Activated B cell treated with CpG ODN at 0.5 μM for 24 hours (primary cell): ENCODE measurements at regions of chr2 and their contacts with region 1.

Region 1: GRCh38 chr2:70789304-70790135 is 923 bp downstream of the FIGLA start:
- DNase-seq: peak; percentile 31
- ATAC-seq: peak; percentile 67
- H3K4me3 Mint-ChIP-seq: peak overlapping the region; percentile 80
- H3K27ac Mint-ChIP-seq: no peak overlapping the region
- H3K4me1 Mint-ChIP-seq: peaks cover 6% of the 10 kb centered on the region
- H3K27me3 Mint-ChIP-seq: peaks cover 51% of the 10 kb centered on the region
- CTCF ChIP-seq: no peak

Region 2: GRCh38 chr2:70656421-70657010 is 133.0 kb before region 1 on chr2:
- CTCF ChIA-PET with region 1: no interaction called
- POLR2A ChIA-PET with region 1: no interaction called
- intact Hi-C with region 1: loop called (anchors 1 kb)
- DNase-seq: no peak
- ATAC-seq: no peak
- H3K4me3 Mint-ChIP-seq: no peak overlapping the region
- H3K27ac Mint-ChIP-seq: no peak overlapping the region
- H3K4me1 Mint-ChIP-seq: no peaks in the 10 kb centered on the region
- H3K27me3 Mint-ChIP-seq: peaks cover 23% of the 10 kb centered on the region
- CTCF ChIP-seq: no peak

Region 3: GRCh38 chr2:70686577-70687460 is 102.7 kb before region 1 on chr2:
- CTCF ChIA-PET with region 1: interaction called, 6 read pairs
- POLR2A ChIA-PET with region 1: no interaction called
- intact Hi-C with region 1: loop called (anchors 1 kb)
- DNase-seq: no peak
- ATAC-seq: no peak
- H3K4me3 Mint-ChIP-seq: no peak overlapping the region
- H3K27ac Mint-ChIP-seq: no peak overlapping the region
- H3K4me1 Mint-ChIP-seq: no peaks in the 10 kb centered on the region
- H3K27me3 Mint-ChIP-seq: no peaks in the 10 kb centered on the region
- CTCF ChIP-seq: no peak

Region 4: GRCh38 chr2:70703900-70704549 is 85.5 kb before region 1 on chr2:
- CTCF ChIA-PET with region 1: interaction called, 3 read pairs
- POLR2A ChIA-PET with region 1: no interaction called
- intact Hi-C with region 1: loop called (anchors 5 kb)
- DNase-seq: no peak
- ATAC-seq: no peak
- H3K4me3 Mint-ChIP-seq: no peak overlapping the region
- H3K27ac Mint-ChIP-seq: no peak overlapping the region
- H3K4me1 Mint-ChIP-seq: no peaks in the 10 kb centered on the region
- H3K27me3 Mint-ChIP-seq: no peaks in the 10 kb centered on the region
- CTCF ChIP-seq: no peak

Region 5: GRCh38 chr2:70871398-70872211 is 82.1 kb after region 1 on chr2:
- CTCF ChIA-PET with region 1: interaction called, 4 read pairs
- POLR2A ChIA-PET with region 1: no interaction called
- intact Hi-C with region 1: loop called (anchors 2 kb)
- DNase-seq: peak; percentile 61
- ATAC-seq: peak; percentile 78
- H3K4me3 Mint-ChIP-seq: no peak overlapping the region
- H3K27ac Mint-ChIP-seq: no peak overlapping the region
- H3K4me1 Mint-ChIP-seq: peaks cover 6% of the 10 kb centered on the region
- H3K27me3 Mint-ChIP-seq: peaks cover 51% of the 10 kb centered on the region
- CTCF ChIP-seq: no peak

Region 6: DNA sequence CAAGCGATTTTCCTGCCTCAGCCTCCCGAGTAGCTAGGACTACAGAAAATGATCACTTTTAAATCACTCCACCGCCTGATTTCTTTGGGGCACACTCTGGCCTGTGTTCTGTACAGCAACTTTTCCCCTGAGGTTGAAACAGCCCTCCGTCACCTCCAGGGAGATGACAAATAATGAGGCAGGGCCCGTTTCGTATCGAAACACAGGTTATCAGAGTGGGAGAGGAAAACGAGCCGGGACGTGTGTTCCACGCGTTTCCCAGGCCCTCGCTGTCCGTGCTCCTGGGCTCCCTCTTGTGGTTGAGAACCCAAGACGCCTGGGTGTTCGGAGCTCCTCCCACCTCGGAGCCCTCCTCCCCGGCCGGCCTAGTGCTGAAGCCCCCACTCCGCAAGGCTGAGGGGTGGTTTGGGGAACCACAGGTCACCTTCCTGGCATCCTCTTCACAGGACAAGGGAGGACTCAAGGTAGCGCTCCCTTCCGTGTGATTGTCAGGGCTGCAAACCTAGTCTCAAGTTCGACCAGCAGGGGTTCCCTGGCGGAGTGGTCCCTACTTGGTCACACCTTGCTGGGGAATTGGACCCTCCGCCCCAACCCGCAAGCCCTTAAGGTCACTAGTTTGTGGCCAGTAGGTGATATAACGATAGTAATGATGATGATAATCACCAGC is 158.9 kb after region 1 on chr2:
- CTCF ChIA-PET with region 1: interaction called, 16 read pairs
- POLR2A ChIA-PET with region 1: no interaction called
- intact Hi-C with region 1: loop called (anchors 1 kb)
- DNase-seq: peak; percentile 66
- ATAC-seq: peak; percentile 99
- H3K4me3 Mint-ChIP-seq: peak overlapping the region; percentile 77
- H3K27ac Mint-ChIP-seq: peak overlapping the region; percentile 4
- H3K4me1 Mint-ChIP-seq: peaks cover 12% of the 10 kb centered on the region
- H3K27me3 Mint-ChIP-seq: peaks cover 20% of the 10 kb centered on the region
- CTCF ChIP-seq: peak; percentile 73